AG04449 (cell line): ENCODE measurements at regions of chr2 and their contacts with region 1.

Region 1: GRCh38 chr2:72579591-72580180 is 246.1 kb downstream of the EXOC6B start:
- DNase-seq: no peak
- H3K4me3 ChIP-seq: no peak overlapping the region
- CTCF ChIP-seq: peak; percentile 33

Region 2: GRCh38 chr2:71545572-71546274 is 1034.0 kb before region 1 on chr2:
- CTCF ChIA-PET with region 1: interaction called, 24 read pairs
- POLR2A ChIA-PET with region 1: no interaction called
- DNase-seq: no peak
- H3K4me3 ChIP-seq: no peak overlapping the region
- CTCF ChIP-seq: peak; percentile 68

Region 3: DNA sequence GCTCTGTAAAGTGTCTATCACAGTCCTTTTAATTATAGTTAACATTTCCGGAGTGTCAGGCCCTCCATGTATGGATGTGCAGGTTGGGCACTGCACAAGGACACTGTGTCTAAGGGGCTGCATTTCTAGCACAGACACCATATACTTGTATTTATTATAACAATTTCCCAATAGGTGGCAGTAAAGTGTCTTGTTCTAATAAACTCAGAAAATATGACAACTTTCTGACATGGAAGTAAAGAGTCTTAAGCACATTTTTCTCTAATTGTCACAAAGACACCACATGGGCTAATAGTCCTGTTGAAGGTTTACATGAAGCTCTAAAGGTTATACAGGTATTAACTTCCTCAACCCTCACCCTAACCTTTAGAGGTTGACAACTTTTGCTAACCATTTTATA is 969.7 kb before region 1 on chr2:
- CTCF ChIA-PET with region 1: interaction called, 13 read pairs
- POLR2A ChIA-PET with region 1: no interaction called
- DNase-seq: peak; percentile 7
- H3K4me3 ChIP-seq: no peak overlapping the region
- CTCF ChIP-seq: peak; percentile 23

Region 4: GRCh38 chr2:71905205-71905604 is 674.5 kb before region 1 on chr2:
- CTCF ChIA-PET with region 1: no interaction called
- POLR2A ChIA-PET with region 1: no interaction called
- DNase-seq: no peak
- H3K4me3 ChIP-seq: no peak overlapping the region
- CTCF ChIP-seq: no peak

Region 5: GRCh38 chr2:72198532-72199241 is 381.0 kb before region 1 on chr2:
- CTCF ChIA-PET with region 1: interaction called, 34 read pairs
- POLR2A ChIA-PET with region 1: no interaction called
- DNase-seq: peak; percentile 17
- H3K4me3 ChIP-seq: no peak overlapping the region
- CTCF ChIP-seq: peak; percentile 24

Region 6: GRCh38 chr2:72745679-72746368 is 166.1 kb after region 1 on chr2:
- CTCF ChIA-PET with region 1: interaction called, 22 read pairs
- POLR2A ChIA-PET with region 1: no interaction called
- DNase-seq: no peak
- H3K4me3 ChIP-seq: no peak overlapping the region
- CTCF ChIP-seq: peak; percentile 49